PC-9 (cell line): ENCODE measurements at regions of chr22 and their contacts with region 1.

Region 1: GRCh38 chr22:35812600-35812999 is 94.9 kb downstream of the APOL5 start:
- DNase-seq: no peak
- H3K4me3 ChIP-seq: no peak overlapping the region
- H3K27ac ChIP-seq: no peak overlapping the region
- H3K4me1 ChIP-seq: no peaks in the 10 kb centered on the region
- H3K27me3 ChIP-seq: no peaks in the 10 kb centered on the region
- CTCF ChIP-seq: no peak

Region 2: GRCh38 chr22:35840302-35840739 is 27.7 kb after region 1 on chr22:
- CTCF ChIA-PET with region 1: no interaction called
- POLR2A ChIA-PET with region 1: no interaction called
- intact Hi-C with region 1: no loop called
- DNase-seq: peak; percentile 71 to 91
- H3K4me3 ChIP-seq: peak overlapping the region; percentile 69
- H3K27ac ChIP-seq: peak overlapping the region; percentile 85
- H3K4me1 ChIP-seq: peaks cover 62% of the 10 kb centered on the region
- H3K27me3 ChIP-seq: no peaks in the 10 kb centered on the region
- CTCF ChIP-seq: no peak

Region 3: DNA sequence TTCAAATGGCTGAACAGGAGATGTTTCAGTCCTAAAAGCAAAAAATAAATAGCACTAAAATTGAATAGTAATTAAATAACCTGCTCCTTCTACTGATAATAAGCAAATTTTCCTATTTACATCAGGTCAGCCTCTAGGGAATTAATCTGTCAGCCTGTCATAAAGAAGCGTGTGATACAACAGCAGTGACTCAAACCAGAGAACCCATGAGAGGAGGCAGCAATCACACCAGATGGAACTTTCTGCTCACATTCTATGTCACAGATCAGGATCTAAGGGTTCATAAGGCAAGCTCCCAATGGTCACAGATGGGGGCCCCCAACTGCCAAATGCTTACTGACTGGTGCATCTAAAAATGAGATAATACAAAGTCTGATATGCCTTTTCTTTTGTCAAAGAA is 174.9 kb after region 1 on chr22:
- CTCF ChIA-PET with region 1: interaction called, 17 read pairs
- POLR2A ChIA-PET with region 1: no interaction called
- intact Hi-C with region 1: no loop called
- DNase-seq: no peak
- H3K4me3 ChIP-seq: no peak overlapping the region
- H3K27ac ChIP-seq: 0 out of 2 replicates have a peak overlapping the region, but pooled peaks have one; percentile 5
- H3K4me1 ChIP-seq: no peaks in the 10 kb centered on the region
- H3K27me3 ChIP-seq: no peaks in the 10 kb centered on the region
- CTCF ChIP-seq: no peak

Region 4: GRCh38 chr22:36028646-36029405 is 216.2 kb after region 1 on chr22 and contains the start of gene RBFOX2:
- CTCF ChIA-PET with region 1: no interaction called
- POLR2A ChIA-PET with region 1: interaction called, 12 read pairs
- intact Hi-C with region 1: no loop called
- DNase-seq: peak; percentile 91 to 99
- H3K4me3 ChIP-seq: peak within 1 kb of the TSS; percentile 74
- H3K27ac ChIP-seq: peak within 1 kb of the TSS; percentile 29
- H3K4me1 ChIP-seq: peaks cover 22% of the 10 kb centered on the region
- H3K27me3 ChIP-seq: no peaks in the 10 kb centered on the region
- CTCF ChIP-seq: no peak
- total RNA-seq, gene RBFOX2: 81.7 and 109 TPM in 2 replicates